Endothelial cell of umbilical vein (primary cell): ENCODE measurements at regions of chr11 and their contacts with region 1.

Region 1: GRCh38 chr11:73177778-73178577 is 35.9 kb upstream of the FCHSD2 start:
- DNase-seq: peak; percentile 94
- H3K4me3 ChIP-seq: no peak overlapping the region
- H3K27ac ChIP-seq: peak overlapping the region; percentile 90
- H3K4me1 ChIP-seq: peaks cover 28% of the 10 kb centered on the region
- H3K27me3 ChIP-seq: no peaks in the 10 kb centered on the region
- CTCF ChIP-seq: peak; percentile 76 to 85
- POLR2A ChIP-seq: no peak

Region 2: DNA sequence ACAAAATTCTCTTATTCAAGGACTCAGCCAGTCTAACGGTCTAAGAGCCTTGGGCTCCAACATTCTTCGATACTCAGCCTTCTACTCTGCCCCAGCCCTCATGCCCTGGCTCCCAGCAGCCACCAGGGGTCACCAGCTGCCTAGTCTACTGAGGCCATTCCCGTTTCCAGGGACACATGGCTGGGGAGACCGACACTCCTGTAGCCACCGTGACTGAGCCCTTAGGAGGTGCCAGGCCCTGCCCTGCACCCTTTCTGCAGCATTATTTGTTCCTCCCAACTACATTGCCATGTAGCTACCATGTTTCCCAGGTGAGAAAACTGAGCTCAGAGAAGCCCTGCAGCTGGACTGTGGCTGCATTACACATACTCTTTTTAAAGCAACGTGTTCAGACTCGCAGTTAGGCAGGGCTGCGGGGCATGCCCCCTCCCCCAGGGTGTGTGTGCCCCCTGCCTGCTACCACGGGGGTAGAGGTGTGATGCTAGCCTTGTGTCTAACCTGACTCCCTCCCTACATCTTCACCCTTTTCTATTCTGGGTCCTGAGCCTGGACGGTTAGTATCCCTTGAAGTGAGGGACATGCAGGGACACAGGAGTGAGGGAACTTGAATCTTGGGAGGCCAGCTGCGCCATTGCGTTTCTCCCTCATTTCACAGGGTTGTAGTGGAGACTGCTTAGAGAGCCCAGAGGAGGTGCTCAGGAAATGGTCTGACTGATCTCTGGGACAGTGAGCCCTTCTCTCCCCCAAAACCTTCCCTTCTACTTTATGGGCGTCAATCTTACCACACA is 346.3 kb before region 1 on chr11:
- CTCF ChIA-PET with region 1: interaction called, 196 read pairs
- POLR2A ChIA-PET with region 1: interaction called, 3 read pairs
- dilution Hi-C with region 1: no loop called
- intact Hi-C with region 1: loop called (anchors 1 kb)
- DNase-seq: peak; percentile 80
- H3K4me3 ChIP-seq: no peak overlapping the region
- H3K27ac ChIP-seq: no peak overlapping the region
- H3K4me1 ChIP-seq: peaks cover 9% of the 10 kb centered on the region
- H3K27me3 ChIP-seq: no peaks in the 10 kb centered on the region
- CTCF ChIP-seq: peak; percentile 91 to 97
- POLR2A ChIP-seq: no peak

Region 3: GRCh38 chr11:72924568-72925190 is 253.3 kb before region 1 on chr11:
- CTCF ChIA-PET with region 1: interaction called, 90 read pairs
- POLR2A ChIA-PET with region 1: interaction called, 4 read pairs
- dilution Hi-C with region 1: no loop called
- intact Hi-C with region 1: loop called (anchors 1 kb)
- DNase-seq: peak; percentile 77
- H3K4me3 ChIP-seq: no peak overlapping the region
- H3K27ac ChIP-seq: no peak overlapping the region
- H3K4me1 ChIP-seq: peaks cover 4% of the 10 kb centered on the region
- H3K27me3 ChIP-seq: no peaks in the 10 kb centered on the region
- CTCF ChIP-seq: peak; percentile 29 to 32
- POLR2A ChIP-seq: no peak

Region 4: DNA sequence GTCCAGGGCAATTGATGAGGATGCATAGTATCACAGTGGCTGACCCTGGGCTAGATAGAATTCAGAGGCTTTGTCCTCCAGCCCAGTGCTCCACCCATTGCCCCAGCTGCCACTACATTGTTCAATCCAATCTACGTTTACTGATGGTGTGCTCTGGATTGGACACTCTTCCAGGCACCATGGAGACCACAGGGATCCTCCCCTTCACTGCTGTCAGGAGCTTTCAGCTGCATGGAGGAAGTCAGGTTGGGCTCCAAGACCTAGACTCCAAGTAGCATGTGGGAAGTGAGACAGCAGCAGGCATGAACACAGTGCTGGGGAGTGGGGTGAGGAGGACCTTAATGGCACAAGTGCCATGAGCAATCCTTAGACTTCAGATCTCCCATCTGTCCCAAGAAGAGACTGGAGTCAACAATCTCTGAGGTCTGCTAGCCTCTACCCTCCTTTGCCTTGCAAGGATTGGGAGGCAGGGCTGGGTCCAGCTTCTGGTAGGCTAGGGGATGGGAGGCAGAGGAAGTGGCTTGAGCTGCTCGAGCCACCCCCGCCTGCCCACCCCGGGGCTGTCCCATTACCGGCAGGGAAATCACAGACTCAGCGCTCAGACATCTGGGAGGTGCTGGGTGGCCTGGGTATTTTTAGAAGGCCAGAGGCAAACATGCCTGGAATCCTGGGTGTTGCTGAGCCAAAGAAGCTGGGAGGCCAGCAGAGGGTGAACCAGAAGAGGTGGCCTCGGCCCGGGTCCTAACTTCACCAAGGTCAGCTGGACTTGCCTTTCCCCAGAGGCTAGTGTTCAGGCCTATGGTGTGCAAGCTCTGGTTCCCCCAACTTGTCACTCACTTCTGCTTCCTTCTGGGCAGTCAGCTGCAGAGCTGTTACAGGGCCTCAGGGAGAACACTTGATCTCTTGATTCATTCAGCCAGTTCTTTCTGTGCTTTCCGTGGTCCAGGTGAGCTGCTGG is 20.6 kb before region 1 on chr11:
- CTCF ChIA-PET with region 1: interaction called, 21 read pairs
- POLR2A ChIA-PET with region 1: no interaction called
- dilution Hi-C with region 1: no loop called
- intact Hi-C with region 1: no loop called
- DNase-seq: no peak
- H3K4me3 ChIP-seq: no peak overlapping the region
- H3K27ac ChIP-seq: no peak overlapping the region
- H3K4me1 ChIP-seq: no peaks in the 10 kb centered on the region
- H3K27me3 ChIP-seq: no peaks in the 10 kb centered on the region
- CTCF ChIP-seq: no peak
- POLR2A ChIP-seq: no peak

Region 5: GRCh38 chr11:73236854-73237253 is 58.9 kb after region 1 on chr11:
- CTCF ChIA-PET with region 1: interaction called, 107 read pairs
- POLR2A ChIA-PET with region 1: no interaction called
- dilution Hi-C with region 1: no loop called
- intact Hi-C with region 1: no loop called
- DNase-seq: peak; percentile 61
- H3K4me3 ChIP-seq: no peak overlapping the region
- H3K27ac ChIP-seq: no peak overlapping the region
- H3K4me1 ChIP-seq: peaks cover 7% of the 10 kb centered on the region
- H3K27me3 ChIP-seq: no peaks in the 10 kb centered on the region
- CTCF ChIP-seq: peak; percentile 65 to 81
- POLR2A ChIP-seq: no peak